ENCODE measurements at regions of chr17 and their contacts with region 1.

Region 1: DNA sequence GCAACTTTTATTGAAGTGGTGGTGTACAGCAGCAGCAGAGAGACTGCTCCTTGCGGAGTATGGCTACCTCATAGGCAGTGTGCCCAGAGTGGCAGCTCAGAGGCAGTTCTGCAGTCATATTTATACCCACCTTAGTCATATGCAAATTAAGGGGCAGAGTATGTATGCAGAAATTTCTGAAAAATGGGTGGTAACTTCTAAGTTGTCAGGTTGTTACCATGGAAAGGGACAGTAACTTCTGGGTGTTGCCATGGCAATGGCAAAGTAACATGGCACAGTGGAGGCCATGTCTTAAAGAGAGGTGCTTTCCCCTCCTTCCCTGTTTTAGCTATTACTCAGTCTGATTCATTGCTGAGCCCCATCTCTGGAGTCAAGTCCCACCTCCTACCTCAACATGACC is 53.4 kb downstream of the MEOX1 start:
- DNase-seq: peak; percentile 85
- ATAC-seq: peak; percentile 97
- H3K4me3 Mint-ChIP-seq: no peak overlapping the region
- H3K27ac Mint-ChIP-seq: peak overlapping the region; percentile 73
- H3K4me1 Mint-ChIP-seq: peaks cover 8% of the 10 kb centered on the region
- H3K27me3 Mint-ChIP-seq: no peaks in the 10 kb centered on the region

Region 2: DNA sequence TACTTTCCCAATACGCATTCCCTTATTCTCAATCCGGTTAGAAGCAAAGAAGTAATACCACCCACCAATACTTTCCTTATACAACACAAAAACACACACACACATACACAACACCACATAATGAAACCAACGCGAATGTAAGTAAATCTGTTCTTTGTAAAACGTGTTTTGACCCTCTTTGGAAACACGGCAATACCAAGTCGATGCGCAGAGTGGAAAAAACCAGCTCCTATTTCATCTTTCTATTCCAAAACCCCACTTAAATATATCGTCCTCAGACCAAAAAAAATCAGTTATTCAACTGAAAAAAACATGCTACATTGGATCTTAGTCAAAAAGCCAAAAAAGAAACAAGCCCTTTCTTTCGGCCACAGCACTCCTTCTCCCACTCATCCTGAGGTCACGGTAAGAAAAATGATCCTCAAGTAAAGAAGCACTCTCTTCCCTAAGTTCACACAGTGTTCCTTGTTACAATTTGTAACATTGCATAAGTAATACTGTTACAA is 240.5 kb before region 1 on chr17:
- CTCF ChIA-PET with region 1: no interaction called
- POLR2A ChIA-PET with region 1: interaction called, 5 read pairs
- intact Hi-C with region 1: loop called in 1 of 2 experiments (anchors 1 kb)
- DNase-seq: peak; percentile 62
- ATAC-seq: peak; percentile 53
- H3K4me3 Mint-ChIP-seq: peak overlapping the region; percentile 85
- H3K27ac Mint-ChIP-seq: peak overlapping the region; percentile 100
- H3K4me1 Mint-ChIP-seq: peaks cover 57% of the 10 kb centered on the region
- H3K27me3 Mint-ChIP-seq: no peaks in the 10 kb centered on the region

Region 3: GRCh38 chr17:43546319-43547188 is 61.8 kb before region 1 on chr17 and contains the start of gene ETV4:
- CTCF ChIA-PET with region 1: no interaction called
- POLR2A ChIA-PET with region 1: interaction called, 6 read pairs
- intact Hi-C with region 1: loop called in 1 of 2 experiments (anchors 1 kb)
- DNase-seq: peak; percentile 96
- ATAC-seq: peak; percentile 94
- H3K4me3 Mint-ChIP-seq: peak within 1 kb of the TSS; percentile 75
- H3K27ac Mint-ChIP-seq: peak within 1 kb of the TSS; percentile 16
- H3K4me1 Mint-ChIP-seq: peaks cover 17% of the 10 kb centered on the region
- H3K27me3 Mint-ChIP-seq: peaks cover 49% of the 10 kb centered on the region
- total RNA-seq, gene ETV4: 2.9 to 3.3 TPM

Region 4: GRCh38 chr17:43661699-43662412 is 53.5 kb after region 1 on chr17 and contains the start of gene MEOX1:
- CTCF ChIA-PET with region 1: interaction called, 3 read pairs
- POLR2A ChIA-PET with region 1: no interaction called
- intact Hi-C with region 1: loop called (anchors 1 to 2 kb)
- DNase-seq: peak; percentile 63
- ATAC-seq: peak; percentile 89
- H3K4me3 Mint-ChIP-seq: peak within 1 kb of the TSS; percentile 14
- H3K27ac Mint-ChIP-seq: peak within 1 kb of the TSS; percentile 51
- H3K4me1 Mint-ChIP-seq: peaks cover 30% of the 10 kb centered on the region
- H3K27me3 Mint-ChIP-seq: peaks cover 6% of the 10 kb centered on the region
- total RNA-seq, gene MEOX1: 0.34 to 0.65 TPM

Region 5: DNA sequence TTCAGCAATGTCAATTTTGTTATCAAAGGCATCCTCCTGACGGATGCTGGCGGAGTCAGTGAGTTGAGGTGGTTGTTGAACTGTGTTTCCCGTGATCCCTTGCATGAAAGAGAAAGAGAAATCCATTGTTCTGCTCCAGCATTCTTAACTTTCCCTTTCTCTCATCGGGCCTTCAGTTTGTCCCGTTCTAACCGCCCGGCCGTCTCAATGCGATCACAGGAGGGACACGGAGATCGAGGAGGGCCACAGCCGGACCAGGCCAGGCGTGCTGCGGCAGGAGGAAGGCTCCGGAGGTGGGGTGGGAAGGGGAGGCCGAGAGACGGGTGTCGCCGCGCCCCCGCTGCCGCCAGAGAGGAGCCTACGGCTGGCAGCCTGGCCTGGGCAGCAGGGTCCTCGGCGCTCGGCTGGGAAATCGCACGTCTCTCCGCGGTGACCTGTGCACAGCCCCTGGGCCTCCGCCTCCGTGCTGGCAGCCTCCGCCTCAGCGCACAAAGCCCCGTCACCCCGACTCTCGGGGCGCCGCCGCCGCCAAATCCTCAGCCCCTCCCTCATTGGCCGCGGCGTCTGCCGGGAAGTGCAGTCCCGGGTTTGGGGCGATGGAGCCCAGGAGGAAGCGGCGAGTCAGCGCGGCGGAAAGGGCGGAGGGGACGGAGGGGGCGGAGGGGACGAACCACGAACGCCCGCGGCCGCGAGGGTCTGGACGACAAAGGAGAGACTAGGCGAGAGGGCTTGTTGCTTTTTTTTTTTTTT is 112.2 kb after region 1 on chr17:
- CTCF ChIA-PET with region 1: interaction called, 3 read pairs
- POLR2A ChIA-PET with region 1: interaction called, 4 read pairs
- intact Hi-C with region 1: loop called in 1 of 2 experiments (anchors 1 kb)
- DNase-seq: peak; percentile 88
- ATAC-seq: peak; percentile 91
- H3K4me3 Mint-ChIP-seq: peak overlapping the region; percentile 78
- H3K27ac Mint-ChIP-seq: peak overlapping the region; percentile 97
- H3K4me1 Mint-ChIP-seq: peaks cover 12% of the 10 kb centered on the region
- H3K27me3 Mint-ChIP-seq: peaks cover 2% of the 10 kb centered on the region

Region 6: DNA sequence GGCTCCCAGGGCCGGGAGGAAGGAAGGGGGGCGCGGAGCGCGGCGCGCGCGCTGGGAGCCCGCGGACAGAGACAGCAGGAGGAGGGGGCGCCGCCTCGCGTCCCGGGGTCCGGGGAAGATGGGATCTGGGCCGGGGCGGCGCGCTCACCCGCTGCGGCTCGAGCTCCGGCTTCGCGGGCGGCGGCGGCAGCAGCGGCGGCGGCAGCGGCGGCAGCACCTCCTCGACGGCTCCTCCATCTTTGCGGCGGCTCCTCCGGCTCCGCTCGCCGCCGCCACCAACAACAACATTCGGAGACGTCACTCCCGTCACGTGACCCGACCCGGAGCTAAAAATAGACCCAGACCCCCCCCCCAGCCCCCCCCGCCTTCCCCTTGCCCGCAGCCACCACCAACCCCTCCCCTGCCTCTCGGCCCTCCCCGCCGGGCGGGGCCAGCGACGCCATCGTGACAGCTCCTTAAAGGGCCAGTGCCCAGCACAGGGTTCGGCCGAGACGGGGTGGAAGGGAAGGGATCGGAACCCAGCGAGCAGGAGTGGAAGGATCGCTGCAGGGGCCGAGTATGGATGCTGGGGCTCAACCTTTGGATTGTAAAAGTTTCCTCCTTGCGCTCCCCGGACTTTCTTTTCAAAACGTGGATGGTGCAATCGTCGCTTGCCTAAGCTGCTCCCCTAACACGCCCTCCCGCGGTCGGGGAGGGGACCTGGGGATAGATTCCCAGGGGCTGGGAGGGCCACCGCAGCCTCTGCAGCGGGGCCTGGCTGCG is 515.2 kb after region 1 on chr17 and contains the start of gene HDAC5:
- CTCF ChIA-PET with region 1: no interaction called
- POLR2A ChIA-PET with region 1: no interaction called
- intact Hi-C with region 1: loop called in 1 of 2 experiments (anchors 5 kb)
- DNase-seq: peak; percentile 98
- ATAC-seq: peak; percentile 97
- H3K4me3 Mint-ChIP-seq: peak within 1 kb of the TSS; percentile 87
- H3K27ac Mint-ChIP-seq: peak within 1 kb of the TSS; percentile 97
- H3K4me1 Mint-ChIP-seq: peaks cover 22% of the 10 kb centered on the region
- H3K27me3 Mint-ChIP-seq: no peaks in the 10 kb centered on the region
- total RNA-seq, gene HDAC5: 16.5 to 22.0 TPM

Measured in activated CD4-positive, alpha-beta T cell treated with anti-CD3 and anti-CD28 coated beads for 36 hours (primary cell).